Caco-2 (cell line): ENCODE measurements at regions of chr3 and their contacts with region 1.

Region 1: GRCh38 chr3:49454458-49454857 is 15.6 kb upstream of the DAG1 start:
- DNase-seq: peak; percentile 83 to 85
- H3K4me3 ChIP-seq: no peak overlapping the region
- H3K4me3 Mint-ChIP-seq: no peak overlapping the region
- H3K27ac Mint-ChIP-seq: peak overlapping the region; percentile 60
- H3K4me1 ChIP-seq: peaks cover 29% of the 10 kb centered on the region
- H3K4me1 Mint-ChIP-seq: peaks cover 19% of the 10 kb centered on the region
- H3K27me3 ChIP-seq: no peaks in the 10 kb centered on the region
- H3K27me3 Mint-ChIP-seq: no peaks in the 10 kb centered on the region
- CTCF ChIP-seq: peak; percentile 39 to 87

Region 2: DNA sequence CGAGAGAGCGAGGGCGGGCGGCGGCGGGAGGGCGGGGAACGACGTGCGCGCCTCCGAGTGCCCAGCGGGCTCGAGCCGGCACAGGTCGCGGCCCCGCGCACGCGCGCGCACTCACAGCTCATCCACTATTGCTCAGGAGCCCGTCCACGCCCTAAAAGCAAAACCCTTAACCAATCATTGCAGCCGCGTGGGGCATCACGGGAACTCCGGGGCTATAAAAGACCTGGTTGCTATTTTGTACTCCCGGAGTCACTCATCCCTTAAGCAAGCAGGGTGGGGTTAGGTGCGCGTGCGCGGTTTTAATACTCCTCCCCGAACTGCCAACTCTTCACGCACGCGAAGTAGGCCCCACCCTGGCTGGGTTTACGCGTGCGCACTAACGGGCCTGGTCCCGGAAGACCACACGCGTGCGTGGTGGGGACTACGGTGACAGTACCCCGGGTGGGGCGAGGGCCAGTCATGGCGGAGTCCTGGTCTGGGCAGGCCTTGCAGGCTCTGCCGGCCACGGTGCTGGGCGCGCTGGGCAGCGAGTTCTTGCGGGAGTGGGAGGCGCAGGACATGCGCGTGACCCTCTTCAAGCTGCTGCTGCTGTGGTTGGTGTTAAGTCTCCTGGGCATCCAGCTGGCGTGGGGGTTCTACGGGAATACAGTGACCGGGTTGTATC is 42.4 kb before region 1 on chr3 and contains the starts of genes RHOA and TCTA:
- CTCF ChIA-PET with region 1: interaction called, 28 read pairs
- POLR2A ChIA-PET with region 1: interaction called, 4 read pairs
- intact Hi-C with region 1: loop called (anchors 1 kb)
- DNase-seq: peak; percentile 98 to 100
- H3K4me3 ChIP-seq: peak within 1 kb of the TSS; percentile 93
- H3K4me3 Mint-ChIP-seq: peak within 1 kb of the TSS; percentile 88
- H3K27ac Mint-ChIP-seq: peak within 1 kb of the TSS; percentile 94
- H3K4me1 ChIP-seq: peaks cover 25% of the 10 kb centered on the region
- H3K4me1 Mint-ChIP-seq: peaks cover 23% of the 10 kb centered on the region
- H3K27me3 ChIP-seq: no peaks in the 10 kb centered on the region
- H3K27me3 Mint-ChIP-seq: no peaks in the 10 kb centered on the region
- CTCF ChIP-seq: no peak
- total RNA-seq, gene RHOA: 338 and 348 TPM in 2 replicates
- total RNA-seq, gene TCTA: 14.2 and 15.5 TPM in 2 replicates

Region 3: GRCh38 chr3:49469936-49470713 is 15.7 kb after region 1 on chr3 and contains the start of gene DAG1:
- CTCF ChIA-PET with region 1: interaction called, 24 read pairs
- POLR2A ChIA-PET with region 1: interaction called, 26 read pairs
- intact Hi-C with region 1: no loop called
- DNase-seq: peak; percentile 98 to 99
- H3K4me3 ChIP-seq: peak within 1 kb of the TSS; percentile 89
- H3K4me3 Mint-ChIP-seq: peak within 1 kb of the TSS; percentile 84
- H3K27ac Mint-ChIP-seq: peak within 1 kb of the TSS; percentile 98
- H3K4me1 ChIP-seq: peaks cover 52% of the 10 kb centered on the region
- H3K4me1 Mint-ChIP-seq: peaks cover 13% of the 10 kb centered on the region
- H3K27me3 ChIP-seq: no peaks in the 10 kb centered on the region
- H3K27me3 Mint-ChIP-seq: no peaks in the 10 kb centered on the region
- CTCF ChIP-seq: no peak
- total RNA-seq, gene DAG1: 154 and 177 TPM in 2 replicates

Region 4: DNA sequence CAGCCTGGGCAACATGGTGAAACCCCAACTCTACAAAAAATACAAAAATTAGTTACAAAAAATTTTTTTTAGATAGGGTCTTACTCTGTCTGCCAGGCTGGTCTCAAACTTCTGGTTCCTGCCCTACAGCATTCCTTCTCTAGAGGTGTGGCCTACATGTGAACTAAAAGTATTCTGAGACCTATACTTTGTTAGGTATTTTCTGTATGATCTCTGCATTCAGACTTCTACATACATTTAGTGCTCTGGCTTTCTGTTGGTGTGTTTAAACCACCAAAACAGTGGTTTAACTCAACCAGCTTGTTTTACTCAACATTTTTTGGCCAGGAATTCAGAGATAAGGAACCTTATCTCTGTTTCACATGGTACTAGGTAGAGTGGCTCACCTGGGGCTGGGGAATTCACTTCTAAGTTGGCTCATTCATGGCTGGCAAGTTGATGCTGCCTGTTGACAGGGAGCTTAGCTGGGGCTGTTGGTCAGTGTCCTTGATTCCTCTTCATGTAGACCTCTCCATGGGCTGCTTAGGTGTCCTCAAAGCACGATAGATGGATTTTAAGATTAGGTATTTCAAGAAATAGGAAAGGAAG is 58.4 kb after region 1 on chr3:
- CTCF ChIA-PET with region 1: interaction called, 11 read pairs
- POLR2A ChIA-PET with region 1: interaction called, 3 read pairs
- intact Hi-C with region 1: loop called (anchors 2 kb)
- DNase-seq: peak; percentile 57 to 60
- H3K4me3 ChIP-seq: no peak overlapping the region
- H3K4me3 Mint-ChIP-seq: peak overlapping the region; percentile 52
- H3K27ac Mint-ChIP-seq: peak overlapping the region; percentile 84
- H3K4me1 ChIP-seq: peaks cover 28% of the 10 kb centered on the region
- H3K4me1 Mint-ChIP-seq: peaks cover 32% of the 10 kb centered on the region
- H3K27me3 ChIP-seq: no peaks in the 10 kb centered on the region
- H3K27me3 Mint-ChIP-seq: no peaks in the 10 kb centered on the region
- CTCF ChIP-seq: no peak

Region 5: DNA sequence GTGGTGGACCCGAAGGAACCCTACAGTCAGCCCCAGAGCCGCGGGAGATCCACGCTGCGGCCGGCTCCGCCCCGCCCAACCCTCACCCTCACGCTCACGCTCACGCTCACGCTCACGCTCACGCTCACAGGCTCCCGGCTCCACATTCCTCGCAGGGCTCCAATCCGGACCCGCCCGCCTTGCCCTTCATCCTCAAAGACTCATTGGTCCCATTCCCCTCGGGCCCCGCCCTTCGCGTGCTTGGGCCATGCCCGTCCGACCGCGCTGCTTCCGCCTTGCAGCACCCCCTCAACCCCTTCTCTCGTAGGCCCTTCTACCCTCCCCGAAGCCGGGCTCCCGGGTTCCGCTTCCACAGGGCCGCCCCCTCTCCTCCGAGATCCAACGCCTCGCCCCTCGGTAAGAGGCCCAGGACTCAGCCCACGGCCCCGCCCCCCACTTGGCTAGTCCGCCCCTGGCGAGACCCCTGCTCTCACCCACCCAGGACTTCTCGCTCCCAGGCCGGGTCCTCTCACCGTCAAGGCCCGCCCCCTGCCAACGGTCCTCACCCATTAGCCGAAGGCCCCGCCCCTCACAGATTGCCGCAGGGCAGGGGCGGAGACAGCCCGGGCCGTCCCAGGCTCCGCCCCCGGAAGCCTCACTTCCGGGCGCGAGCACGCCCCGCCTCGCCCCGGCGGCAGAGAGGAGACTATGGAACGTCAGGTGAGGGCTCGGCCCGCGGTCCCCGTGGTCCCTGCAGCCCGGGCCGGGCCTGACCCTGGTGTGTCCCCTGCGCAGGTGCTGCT is 219.4 kb after region 1 on chr3 and contains the start of gene APEH:
- CTCF ChIA-PET with region 1: interaction called, 14 read pairs
- POLR2A ChIA-PET with region 1: no interaction called
- intact Hi-C with region 1: loop called (anchors 1 kb)
- DNase-seq: peak; percentile 99
- H3K4me3 ChIP-seq: peak within 1 kb of the TSS; percentile 75
- H3K4me3 Mint-ChIP-seq: peak within 1 kb of the TSS; percentile 93
- H3K27ac Mint-ChIP-seq: peak within 1 kb of the TSS; percentile 96
- H3K4me1 ChIP-seq: peaks cover 7% of the 10 kb centered on the region; the same call in 1 of the 2 replicates
- H3K4me1 Mint-ChIP-seq: peaks cover 11% of the 10 kb centered on the region
- H3K27me3 ChIP-seq: no peaks in the 10 kb centered on the region
- H3K27me3 Mint-ChIP-seq: no peaks in the 10 kb centered on the region
- CTCF ChIP-seq: no peak
- total RNA-seq, gene APEH: 236 and 279 TPM in 2 replicates